ENCODE measurements at regions of chr1 and their contacts with region 1.

Region 1: DNA sequence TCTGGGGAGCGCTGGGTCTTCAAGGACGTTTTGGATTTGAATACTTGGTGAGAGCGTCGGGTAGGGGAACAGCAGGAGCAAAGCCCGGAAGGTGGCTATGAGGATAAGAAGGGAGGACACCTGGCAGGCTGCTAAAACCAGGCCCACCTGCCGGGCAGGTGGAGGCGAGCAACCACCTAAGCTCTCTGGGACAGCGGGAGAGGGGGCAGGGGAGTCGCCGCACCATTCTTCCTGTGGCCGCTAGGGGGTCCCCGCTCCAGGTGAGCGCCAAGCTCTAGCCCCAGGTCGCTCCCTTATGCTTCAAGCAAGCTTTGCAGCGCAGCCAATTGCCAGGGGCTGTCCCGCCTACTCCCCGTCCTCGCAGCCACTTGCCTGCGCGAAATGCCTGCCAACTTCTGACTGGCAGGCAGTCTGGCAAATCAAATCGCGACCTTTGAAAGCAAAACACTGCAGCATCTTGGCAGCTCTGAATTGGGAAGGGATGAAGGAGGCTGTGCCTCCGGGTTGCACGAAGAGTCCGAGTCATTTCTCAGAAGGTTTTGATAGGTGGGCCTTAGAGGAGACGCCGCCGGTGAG is at the start of gene NIPAL3:
- H3K4me3 ChIP-seq: peak within 1 kb of the TSS; percentile 49
- H3K27ac ChIP-seq: no peak within 1 kb of the TSS; the same call in 1 of the 2 replicates
- H3K4me1 ChIP-seq: peaks cover 6% of the 10 kb centered on the region
- CTCF ChIP-seq: peak; percentile 96

Region 2: GRCh38 chr1:24426744-24427544 is 11.5 kb after region 1 on chr1:
- CTCF ChIA-PET with region 1: interaction called, 15 read pairs
- POLR2A ChIA-PET with region 1: interaction called, 7 read pairs
- H3K4me3 ChIP-seq: no peak overlapping the region
- H3K27ac ChIP-seq: no peak overlapping the region
- H3K4me1 ChIP-seq: no peaks in the 10 kb centered on the region
- CTCF ChIP-seq: no peak

Region 3: GRCh38 chr1:24898484-24899439 is 483.3 kb after region 1 on chr1:
- CTCF ChIA-PET with region 1: no interaction called
- POLR2A ChIA-PET with region 1: no interaction called
- H3K4me3 ChIP-seq: no peak overlapping the region
- H3K27ac ChIP-seq: no peak overlapping the region
- H3K4me1 ChIP-seq: no peaks in the 10 kb centered on the region
- CTCF ChIP-seq: no peak